ENCODE measurements at regions of chr21 and their contacts with region 1.

Region 1: DNA sequence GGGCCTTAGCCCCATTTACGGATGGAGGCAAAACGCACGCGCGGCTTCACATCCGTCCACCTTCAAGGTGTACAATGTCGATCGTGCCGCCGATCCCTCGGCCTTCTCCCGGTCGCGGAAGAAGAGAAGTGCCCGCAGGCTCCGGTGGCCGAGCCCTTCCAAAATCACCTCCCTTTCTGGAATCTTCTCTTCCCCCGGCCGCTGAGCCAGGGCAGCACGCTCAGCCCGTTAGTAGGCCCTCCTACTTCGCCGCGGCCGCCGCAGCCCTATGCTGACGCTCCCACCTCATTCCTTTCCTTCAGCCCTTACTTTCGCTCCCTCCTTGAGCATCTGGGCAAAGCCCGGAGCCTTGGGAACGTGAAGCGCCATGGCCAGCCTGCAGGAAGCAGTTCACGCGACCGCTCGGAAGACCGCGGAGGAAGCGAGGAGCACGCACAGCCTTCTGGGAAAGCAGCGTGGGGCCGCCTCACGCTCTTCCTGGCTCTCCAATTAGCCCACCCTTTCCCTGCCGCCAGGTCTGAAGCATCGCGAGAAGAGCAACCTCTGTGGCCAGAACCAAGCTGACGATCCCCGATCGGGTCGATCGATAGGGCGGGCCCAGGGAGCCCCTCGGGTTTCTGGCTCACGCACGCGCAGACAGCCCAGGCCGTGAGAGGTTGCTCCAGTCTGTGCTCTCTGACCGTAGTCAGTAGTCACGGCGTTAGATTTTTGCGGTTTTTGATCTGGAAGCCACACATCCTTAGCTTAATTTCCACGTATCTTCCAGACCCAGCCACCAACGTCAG is at the start of gene CCT8:
- DNase-seq: peak; percentile 99
- ATAC-seq: peak; percentile 98 to 99
- total RNA-seq, gene CCT8: 97.5 to 117 TPM

Region 2: DNA sequence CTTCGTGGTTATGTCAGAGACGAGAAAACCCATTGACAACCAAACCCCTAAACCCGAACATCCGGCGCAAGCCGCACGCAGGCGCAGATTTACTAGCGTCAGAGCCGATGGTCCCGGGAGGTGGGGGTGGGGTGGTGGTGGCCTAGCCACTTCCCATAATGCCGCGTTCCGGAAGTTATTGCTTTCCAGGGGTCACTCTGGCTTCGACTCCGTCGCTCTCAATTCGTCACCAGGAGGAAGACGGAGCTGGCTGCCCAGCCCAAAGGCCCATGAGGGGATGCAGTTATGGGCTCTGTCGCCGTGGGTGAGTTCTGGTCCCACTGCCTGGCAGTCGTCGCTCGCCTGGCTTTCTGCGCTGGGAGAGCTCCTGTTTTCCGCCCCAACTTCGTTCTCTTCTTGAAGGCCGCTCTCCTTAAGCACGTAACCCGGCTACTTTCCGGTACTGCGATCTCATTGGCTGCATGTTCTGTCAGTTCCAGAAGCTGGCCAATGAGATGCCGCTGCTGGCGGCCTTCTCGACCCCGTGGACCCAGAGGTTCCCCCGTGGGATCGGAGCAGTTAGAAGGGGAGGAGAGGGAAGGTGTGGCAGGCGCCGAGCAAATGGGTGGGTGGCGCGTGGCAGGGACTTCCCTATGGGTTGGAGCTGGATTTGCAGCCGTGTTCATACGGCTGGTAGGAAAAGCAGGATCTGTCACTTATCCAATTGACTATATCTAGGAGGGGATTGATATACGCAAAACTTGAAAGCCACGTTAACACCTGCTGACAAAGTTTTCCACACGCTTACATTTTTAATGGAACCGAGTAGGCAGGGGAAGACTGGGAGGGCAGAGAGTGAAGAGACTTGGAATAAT is 48.7 kb before region 1 on chr21 and contains the start of gene USP16:
- intact Hi-C with region 1: loop called in 1 of 2 experiments (anchors 5 kb)
- DNase-seq: peak; percentile 95
- ATAC-seq: peak; percentile 97 to 99
- total RNA-seq, gene USP16: 29.0 to 35.6 TPM

Region 3: GRCh38 chr21:29114765-29115164 is 41.4 kb after region 1 on chr21:
- intact Hi-C with region 1: no loop called
- DNase-seq: no peak
- ATAC-seq: no peak

Measured in left cardiac atrium (tissue), 4 donors.